ENCODE measurements at regions of chr13 and their contacts with region 1.

Region 1: DNA sequence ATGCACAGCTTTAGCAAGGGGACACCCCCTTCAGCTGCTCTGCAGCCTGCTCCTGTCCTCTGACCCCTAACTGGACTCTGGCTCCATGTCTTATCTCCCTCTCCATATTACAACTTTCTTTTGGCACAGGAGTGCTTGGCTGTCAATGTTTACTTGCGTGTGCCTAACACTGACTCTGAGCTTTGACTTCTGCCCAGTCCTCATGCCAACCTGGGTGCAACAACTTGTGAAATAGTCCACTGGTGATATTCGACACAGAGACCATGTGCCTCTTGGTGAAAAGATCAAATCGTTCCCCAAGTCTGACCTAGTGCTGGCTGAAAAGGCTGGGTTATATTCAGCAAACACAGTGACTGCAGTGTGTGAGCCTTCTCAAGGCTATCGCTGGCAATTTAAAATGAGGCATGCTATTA is 34.1 kb upstream of the KLF12 start:
- DNase-seq: no peak
- H3K4me3 ChIP-seq: no peak overlapping the region
- H3K27ac ChIP-seq: no peak overlapping the region
- H3K4me1 ChIP-seq: no peaks in the 10 kb centered on the region
- H3K27me3 ChIP-seq: no peaks in the 10 kb centered on the region
- CTCF ChIP-seq: no peak
- POLR2A ChIP-seq: no peak

Region 2: DNA sequence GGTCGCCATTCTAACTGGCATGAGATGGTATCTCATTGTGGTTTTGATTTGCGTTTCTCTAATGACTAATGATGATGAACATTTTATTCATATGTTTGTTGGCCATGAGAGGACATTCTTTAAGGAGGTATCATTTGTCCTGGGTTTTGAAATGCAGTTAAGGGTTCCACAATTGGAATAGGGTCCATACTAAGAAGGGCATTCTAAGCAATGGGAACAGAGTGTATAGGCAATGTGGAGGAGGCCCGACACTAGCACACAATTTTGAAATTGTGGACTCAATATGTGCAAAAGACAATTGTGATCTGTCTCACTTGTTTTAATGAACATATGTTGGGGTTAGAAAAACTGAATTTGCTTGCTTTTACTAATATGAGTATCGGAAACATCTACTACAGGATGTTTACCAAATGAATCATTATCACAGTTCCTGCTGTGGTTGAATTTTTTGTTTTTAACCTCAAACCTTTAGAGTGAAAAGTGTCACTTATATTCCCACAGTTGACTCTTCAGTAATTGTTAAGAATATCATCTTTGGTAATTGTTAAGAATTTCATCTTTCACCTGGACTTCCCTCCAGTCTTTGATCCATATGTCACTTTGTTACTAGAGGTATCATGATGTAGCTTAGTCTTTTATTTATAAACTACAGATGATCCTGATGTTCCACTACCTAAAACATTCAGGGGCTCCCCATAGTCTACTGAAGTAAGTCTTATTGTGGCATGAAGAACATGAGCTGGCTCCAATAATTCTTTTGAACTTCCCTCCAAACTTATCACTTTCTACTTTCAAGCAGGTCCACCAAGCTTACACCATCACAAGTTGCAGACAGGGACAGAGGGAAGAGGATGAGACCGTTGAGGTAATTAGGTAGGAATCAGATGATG is 75.6 kb after region 1 on chr13:
- intact Hi-C with region 1: loop called (anchors 5 kb)
- DNase-seq: no peak
- H3K4me3 ChIP-seq: no peak overlapping the region
- H3K27ac ChIP-seq: no peak overlapping the region
- H3K4me1 ChIP-seq: no peaks in the 10 kb centered on the region
- H3K27me3 ChIP-seq: no peaks in the 10 kb centered on the region
- CTCF ChIP-seq: no peak
- POLR2A ChIP-seq: no peak

Region 3: GRCh38 chr13:75749407-75749806 is 1581.1 kb after region 1 on chr13:
- intact Hi-C with region 1: no loop called
- DNase-seq: no peak
- H3K4me3 ChIP-seq: no peak overlapping the region
- H3K27ac ChIP-seq: no peak overlapping the region
- H3K4me1 ChIP-seq: no peaks in the 10 kb centered on the region
- H3K27me3 ChIP-seq: no peaks in the 10 kb centered on the region
- CTCF ChIP-seq: no peak
- POLR2A ChIP-seq: no peak